Posterior vena cava (tissue), 2 donors: ENCODE measurements at regions of chr11 and their contacts with region 1.

Region 1: GRCh38 chr11:121466063-121466794 is 13.5 kb upstream of the SORL1-AS1 start:
- DNase-seq: peak; percentile 95

Region 2: DNA sequence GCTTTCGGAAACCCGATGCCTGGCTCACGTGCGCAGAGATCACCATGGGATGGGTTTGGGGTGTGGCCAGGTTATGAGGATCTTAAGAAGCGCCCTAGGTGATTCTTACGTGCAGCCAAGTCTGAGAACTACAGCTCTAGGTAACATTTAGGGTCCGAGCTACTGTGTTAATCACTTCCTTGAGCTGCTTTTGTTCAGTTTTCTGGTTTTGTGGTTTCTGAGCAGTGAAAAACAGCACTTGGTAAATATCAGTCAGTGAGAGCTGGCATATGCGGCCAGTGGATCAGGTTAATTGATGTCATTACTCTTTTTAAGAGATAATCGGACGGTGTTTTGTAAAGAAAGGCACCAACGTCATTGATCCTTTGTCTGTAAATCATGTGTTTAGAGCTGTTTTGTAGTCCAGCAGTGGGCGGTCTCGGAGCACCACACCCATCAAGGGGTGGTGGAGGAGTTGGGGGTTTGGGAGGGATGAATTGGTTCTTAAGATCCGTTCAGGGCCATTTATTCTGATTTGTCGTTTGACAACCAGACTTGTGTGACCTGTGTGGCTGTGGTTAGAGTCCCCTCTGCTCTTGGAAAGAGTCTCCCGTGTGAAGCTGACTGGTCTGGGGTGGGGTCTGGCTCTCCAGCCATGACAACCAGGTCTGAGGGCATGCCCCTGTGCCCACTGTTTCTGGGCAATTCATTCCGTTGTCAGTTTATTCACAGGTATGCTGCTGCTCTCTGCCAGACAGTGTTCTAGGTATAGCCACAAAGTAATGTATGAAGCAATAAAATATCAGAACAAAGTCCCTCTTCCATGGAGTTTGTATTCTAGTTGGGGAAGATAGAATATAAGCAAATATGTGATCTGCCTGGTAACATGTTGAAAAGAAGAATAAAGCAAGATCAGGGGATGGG is 48.5 kb after region 1 on chr11:
- intact Hi-C with region 1: loop called in 1 of 2 experiments (anchors 5 kb)
- DNase-seq: no peak